WTC11 (cell line): ENCODE measurements at regions of chr15 and their contacts with region 1.

Region 1: DNA sequence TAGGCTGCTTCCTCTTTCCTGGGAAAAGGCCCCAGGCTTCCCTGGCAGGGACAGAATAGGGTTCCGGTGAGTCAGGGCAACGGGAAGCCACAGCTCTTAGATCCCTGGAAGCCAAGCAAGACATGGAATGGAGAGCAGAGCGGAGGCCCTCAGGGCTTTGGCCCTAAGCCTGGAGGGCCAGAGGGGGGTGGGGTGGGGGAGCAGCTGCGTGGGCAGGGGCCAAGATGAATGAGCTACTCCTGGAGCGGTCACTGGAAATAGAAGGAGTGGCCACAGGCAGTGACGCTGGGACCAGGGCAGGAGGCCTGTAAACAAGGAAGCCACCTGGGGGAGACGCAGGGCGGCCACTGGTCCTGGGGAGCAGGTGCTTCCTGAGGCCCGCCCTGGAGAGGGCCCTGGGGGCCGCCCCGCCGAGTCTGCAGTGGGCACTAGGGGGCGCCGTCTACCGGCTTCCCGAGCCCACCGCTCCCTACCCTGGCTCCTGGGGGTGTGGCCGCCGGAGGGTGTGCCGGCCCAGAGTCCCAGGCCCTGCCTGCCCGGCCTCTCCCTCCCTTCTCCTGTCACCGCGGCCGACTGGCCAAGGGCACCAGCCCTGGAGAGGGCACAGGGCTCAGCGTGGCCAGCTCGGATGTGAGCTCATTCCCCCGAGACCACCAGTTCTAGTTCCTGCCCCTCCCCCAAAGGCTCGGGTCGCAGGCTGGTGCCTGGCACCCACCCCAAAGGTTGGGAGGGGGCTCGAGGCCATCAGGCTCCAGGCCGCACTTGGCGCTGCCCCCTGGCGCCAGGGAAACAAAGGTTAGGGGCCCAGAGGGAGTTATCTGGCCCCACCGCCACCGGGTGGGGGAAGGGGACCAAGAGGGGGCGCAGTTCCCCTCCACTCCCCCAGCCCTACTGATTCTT is 12.1 kb downstream of the VPS18 start:
- DNase-seq: peak; percentile 95
- ATAC-seq: peak; percentile 82
- H3K4me3 Mint-ChIP-seq: peak overlapping the region; percentile 62
- H3K27ac Mint-ChIP-seq: no peak overlapping the region
- H3K4me1 Mint-ChIP-seq: peaks cover 14% of the 10 kb centered on the region
- H3K27me3 Mint-ChIP-seq: no peaks in the 10 kb centered on the region
- CTCF ChIP-seq: peak; percentile 83

Region 2: DNA sequence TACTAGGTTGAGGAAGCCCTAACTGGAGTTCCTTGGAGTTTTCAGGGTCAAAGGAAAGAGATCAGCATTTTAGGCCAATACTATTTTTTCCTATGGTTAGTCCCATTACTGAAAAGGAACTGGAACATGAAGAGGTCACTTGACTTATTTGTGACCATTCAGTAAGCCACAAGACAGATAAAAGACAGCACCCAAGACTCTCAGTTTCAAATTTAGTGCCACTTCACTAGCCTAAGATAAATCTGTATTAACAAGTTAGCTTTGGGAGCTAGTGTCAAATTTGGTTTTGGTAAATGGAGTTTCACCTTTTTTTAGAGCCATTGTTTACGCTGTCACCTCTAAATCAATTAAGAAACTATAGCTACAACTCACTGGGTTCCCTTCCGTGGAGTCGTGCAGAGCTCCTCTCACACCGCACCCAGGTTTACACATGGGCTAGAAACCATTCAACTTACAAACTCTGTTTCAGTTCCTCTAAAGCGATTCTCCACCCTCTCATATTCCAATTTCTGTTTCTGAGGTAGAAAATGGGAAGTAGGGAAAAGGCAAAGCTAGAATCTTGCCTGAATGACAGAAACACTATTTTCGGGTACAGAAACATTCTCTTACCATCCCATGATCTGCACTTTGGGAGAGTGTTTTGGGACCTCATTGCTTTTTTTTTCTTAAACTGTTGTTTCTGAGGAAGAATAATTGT is 355.9 kb before region 1 on chr15:
- CTCF ChIA-PET with region 1: no interaction called
- POLR2A ChIA-PET with region 1: no interaction called
- DNase-seq: no peak
- ATAC-seq: no peak
- H3K4me3 Mint-ChIP-seq: no peak overlapping the region
- H3K27ac Mint-ChIP-seq: no peak overlapping the region
- H3K4me1 Mint-ChIP-seq: peaks cover 29% of the 10 kb centered on the region
- H3K27me3 Mint-ChIP-seq: no peaks in the 10 kb centered on the region
- CTCF ChIP-seq: no peak

Region 3: DNA sequence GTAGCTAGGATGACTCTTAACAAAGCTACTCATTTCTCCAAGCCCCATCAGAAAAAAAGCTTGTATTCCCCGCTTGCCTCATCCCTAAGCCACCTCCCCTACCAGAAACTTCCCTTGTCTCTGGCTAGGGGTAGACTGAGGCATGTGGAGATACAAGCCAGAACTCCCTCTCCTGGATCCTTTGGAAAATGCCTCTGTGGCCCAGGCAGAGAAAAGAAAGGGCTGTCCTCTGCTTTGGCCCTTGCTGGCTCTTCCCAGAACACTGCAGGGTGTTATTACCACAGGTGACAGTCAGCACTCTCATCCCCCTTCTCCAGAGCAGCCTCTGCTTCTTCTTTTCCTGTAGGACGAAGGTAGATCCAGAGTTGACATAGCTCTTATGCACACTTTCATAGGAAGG is 166.5 kb before region 1 on chr15:
- CTCF ChIA-PET with region 1: no interaction called
- POLR2A ChIA-PET with region 1: no interaction called
- DNase-seq: no peak
- ATAC-seq: peak; percentile 62
- H3K4me3 Mint-ChIP-seq: no peak overlapping the region
- H3K27ac Mint-ChIP-seq: peak overlapping the region; percentile 91
- H3K4me1 Mint-ChIP-seq: peaks cover 43% of the 10 kb centered on the region
- H3K27me3 Mint-ChIP-seq: no peaks in the 10 kb centered on the region
- CTCF ChIP-seq: no peak

Region 4: GRCh38 chr15:40814901-40815670 is 91.3 kb before region 1 on chr15:
- CTCF ChIA-PET with region 1: no interaction called
- POLR2A ChIA-PET with region 1: no interaction called
- DNase-seq: no peak
- ATAC-seq: no peak
- H3K4me3 Mint-ChIP-seq: no peak overlapping the region
- H3K27ac Mint-ChIP-seq: peak overlapping the region; percentile 11; the same call in 1 of the 2 replicates
- H3K4me1 Mint-ChIP-seq: no peaks in the 10 kb centered on the region
- H3K27me3 Mint-ChIP-seq: no peaks in the 10 kb centered on the region; the same call in 1 of the 2 replicates
- CTCF ChIP-seq: no peak

Region 5: DNA sequence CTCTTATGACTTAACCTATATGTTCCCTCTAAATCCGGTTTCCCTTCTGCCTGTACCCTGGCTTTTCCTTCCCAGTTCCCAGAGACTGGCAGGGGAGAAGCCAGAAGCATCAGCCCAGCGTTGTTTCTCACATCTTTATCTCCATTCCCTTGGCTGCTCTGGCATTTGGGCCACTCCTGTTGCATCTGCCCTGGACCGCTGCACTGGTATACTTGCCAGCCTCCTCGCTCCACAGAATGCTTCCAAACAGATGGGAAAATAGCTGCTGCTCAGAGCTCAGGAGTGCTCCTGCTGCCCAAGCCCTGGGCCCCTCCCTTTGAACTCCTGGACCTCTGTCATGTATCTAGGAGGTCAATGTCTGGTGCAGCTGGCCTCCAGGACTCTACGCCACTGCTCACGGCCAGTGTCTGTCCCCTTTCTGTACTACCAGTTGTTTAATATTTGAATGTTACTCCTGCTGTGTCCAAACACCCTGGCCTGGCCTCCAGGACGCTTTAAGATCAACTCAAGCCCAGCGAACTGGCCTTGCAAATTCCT is 55.7 kb before region 1 on chr15:
- CTCF ChIA-PET with region 1: no interaction called
- POLR2A ChIA-PET with region 1: no interaction called
- DNase-seq: no peak
- ATAC-seq: no peak
- H3K4me3 Mint-ChIP-seq: no peak overlapping the region
- H3K27ac Mint-ChIP-seq: 0 out of 2 replicates have a peak overlapping the region, but pooled peaks have one; percentile 20
- H3K4me1 Mint-ChIP-seq: peaks cover 26% of the 10 kb centered on the region
- H3K27me3 Mint-ChIP-seq: no peaks in the 10 kb centered on the region
- CTCF ChIP-seq: no peak

Region 6: GRCh38 chr15:40960926-40961325 is 54.6 kb after region 1 on chr15:
- CTCF ChIA-PET with region 1: interaction called, 30 read pairs
- POLR2A ChIA-PET with region 1: interaction called, 3 read pairs
- DNase-seq: no peak
- ATAC-seq: no peak
- H3K4me3 Mint-ChIP-seq: no peak overlapping the region
- H3K27ac Mint-ChIP-seq: no peak overlapping the region
- H3K4me1 Mint-ChIP-seq: peaks cover 30% of the 10 kb centered on the region
- H3K27me3 Mint-ChIP-seq: no peaks in the 10 kb centered on the region
- CTCF ChIP-seq: no peak

Region 7: DNA sequence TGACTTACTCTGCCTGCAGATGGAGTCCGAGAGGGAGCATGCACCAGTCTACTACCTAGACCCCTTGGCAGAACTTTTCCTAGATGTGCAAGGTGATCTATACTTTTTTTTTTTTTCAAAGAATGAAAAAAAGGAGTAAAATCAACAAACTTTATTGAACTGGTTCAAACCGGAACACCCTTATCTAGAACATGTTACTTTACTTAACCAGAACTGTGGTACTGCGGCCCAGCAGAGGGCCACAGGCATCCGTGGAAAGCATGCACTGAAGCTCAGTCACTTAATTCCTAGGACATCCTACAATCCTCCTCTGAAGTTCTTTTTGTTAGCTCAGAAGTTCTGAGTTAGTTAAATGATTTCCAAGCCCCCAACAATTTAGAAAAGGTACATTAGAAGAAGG is 68.5 kb after region 1 on chr15:
- CTCF ChIA-PET with region 1: interaction called, 13 read pairs
- POLR2A ChIA-PET with region 1: no interaction called
- DNase-seq: no peak
- ATAC-seq: no peak
- H3K4me3 Mint-ChIP-seq: no peak overlapping the region
- H3K27ac Mint-ChIP-seq: no peak overlapping the region; the same call in 1 of the 2 replicates
- H3K4me1 Mint-ChIP-seq: peaks cover 11% of the 10 kb centered on the region
- H3K27me3 Mint-ChIP-seq: no peaks in the 10 kb centered on the region
- CTCF ChIP-seq: no peak